ENCODE measurements at regions of chr12 and their contacts with region 1.

Region 1: GRCh38 chr12:27220057-27220987 is 23.8 kb upstream of the STK38L start:
- DNase-seq: peak; percentile 21
- H3K4me3 Mint-ChIP-seq: no peak overlapping the region
- H3K27ac Mint-ChIP-seq: peak overlapping the region; percentile 68
- H3K4me1 Mint-ChIP-seq: peaks cover 17% of the 10 kb centered on the region
- H3K27me3 Mint-ChIP-seq: no peaks in the 10 kb centered on the region

Region 2: GRCh38 chr12:27185234-27186021 is 34.9 kb before region 1 on chr12:
- CTCF ChIA-PET with region 1: no interaction called
- intact Hi-C with region 1: no loop called
- DNase-seq: peak; percentile 71
- H3K4me3 Mint-ChIP-seq: no peak overlapping the region
- H3K27ac Mint-ChIP-seq: no peak overlapping the region
- H3K4me1 Mint-ChIP-seq: peaks cover 19% of the 10 kb centered on the region
- H3K27me3 Mint-ChIP-seq: no peaks in the 10 kb centered on the region

Region 3: DNA sequence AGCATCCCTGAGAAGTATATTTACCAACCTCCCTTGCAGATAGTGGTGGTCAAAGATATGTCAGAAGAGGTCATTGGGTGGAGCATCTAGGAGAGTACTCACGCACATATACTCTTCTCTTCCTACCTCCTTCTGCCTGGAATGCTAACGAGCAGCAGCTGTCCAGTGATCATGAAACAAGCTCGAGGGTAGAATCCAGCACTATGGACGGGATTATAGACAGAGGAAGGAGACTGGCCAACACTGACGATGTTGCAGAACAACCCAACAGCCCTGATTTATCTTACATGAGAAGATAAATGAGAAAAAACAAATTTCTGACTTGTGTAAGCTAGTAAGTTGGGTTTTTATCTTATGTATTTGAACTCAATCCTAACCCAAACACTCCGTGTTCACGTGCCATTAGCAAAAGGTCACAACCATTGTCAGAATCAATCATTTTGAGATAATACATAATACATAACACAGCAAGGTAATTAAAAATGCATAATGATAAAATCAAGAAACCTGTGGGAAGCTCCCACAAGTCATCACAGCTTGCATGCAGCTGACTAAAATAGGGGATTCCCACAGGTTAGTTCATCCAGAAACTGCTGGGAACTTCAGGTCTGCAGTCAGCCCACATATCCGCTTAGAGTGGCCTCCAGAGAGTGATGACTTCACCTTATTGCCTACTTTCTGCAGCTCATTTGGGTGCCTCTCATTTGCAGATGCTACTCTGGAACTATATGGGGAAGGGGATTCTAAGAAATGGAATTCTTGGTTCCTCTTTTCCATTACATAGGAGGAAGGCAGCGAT is 12.5 kb before region 1 on chr12:
- CTCF ChIA-PET with region 1: interaction called, 3 read pairs
- intact Hi-C with region 1: loop called (anchors 1 kb)
- DNase-seq: peak; percentile 74
- H3K4me3 Mint-ChIP-seq: no peak overlapping the region
- H3K27ac Mint-ChIP-seq: peak overlapping the region; percentile 38
- H3K4me1 Mint-ChIP-seq: peaks cover 19% of the 10 kb centered on the region
- H3K27me3 Mint-ChIP-seq: no peaks in the 10 kb centered on the region

Region 4: DNA sequence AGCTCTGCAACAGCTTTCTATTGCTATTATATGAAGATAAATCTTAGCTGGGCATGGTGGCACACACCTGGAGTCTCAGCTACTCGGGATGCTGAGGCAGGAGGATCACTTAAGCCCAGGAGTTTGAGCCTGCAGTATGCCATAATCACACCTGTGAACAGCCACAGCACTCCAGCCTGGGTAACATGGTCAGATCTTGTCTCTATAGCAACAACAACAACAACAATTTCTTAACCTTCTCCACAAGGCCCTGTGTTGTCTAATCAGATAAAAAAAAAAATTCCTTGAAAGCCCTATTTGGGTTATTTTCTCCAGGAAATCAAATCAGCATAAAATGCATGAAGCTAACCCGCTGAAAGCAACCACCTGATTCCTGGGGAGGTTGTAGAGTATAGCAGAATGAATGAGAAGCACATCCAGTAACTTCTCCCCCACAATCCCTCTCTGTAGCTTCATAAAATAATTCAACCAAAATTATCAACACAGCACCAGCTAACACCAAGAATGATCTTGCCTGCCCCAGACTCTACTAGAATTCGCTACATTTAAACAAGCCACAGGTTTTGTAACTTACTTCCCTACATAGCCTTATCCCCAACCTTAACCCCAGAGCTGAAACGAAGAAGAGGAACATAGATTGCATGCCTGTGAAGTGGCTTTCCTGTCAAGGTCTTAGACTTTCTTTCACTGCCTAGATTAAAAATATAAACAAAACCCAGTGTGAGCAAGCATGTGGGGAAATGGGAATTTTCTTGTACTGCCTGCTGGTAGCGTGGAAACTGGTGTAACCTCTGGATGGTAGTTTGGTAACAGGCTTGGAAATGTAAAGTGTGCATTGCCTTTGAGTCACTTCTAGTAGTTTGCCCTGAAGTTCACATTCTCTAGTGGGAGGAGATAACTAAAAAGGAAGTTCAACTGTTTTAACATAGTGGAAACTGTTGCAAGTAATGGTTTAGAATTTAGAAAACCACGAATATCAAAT is 17.8 kb after region 1 on chr12:
- CTCF ChIA-PET with region 1: interaction called, 4 read pairs
- intact Hi-C with region 1: loop called (anchors 1 kb)
- DNase-seq: peak; percentile 16
- H3K4me3 Mint-ChIP-seq: peak overlapping the region; percentile 13
- H3K27ac Mint-ChIP-seq: peak overlapping the region; percentile 64
- H3K4me1 Mint-ChIP-seq: peaks cover 33% of the 10 kb centered on the region
- H3K27me3 Mint-ChIP-seq: no peaks in the 10 kb centered on the region

Region 5: DNA sequence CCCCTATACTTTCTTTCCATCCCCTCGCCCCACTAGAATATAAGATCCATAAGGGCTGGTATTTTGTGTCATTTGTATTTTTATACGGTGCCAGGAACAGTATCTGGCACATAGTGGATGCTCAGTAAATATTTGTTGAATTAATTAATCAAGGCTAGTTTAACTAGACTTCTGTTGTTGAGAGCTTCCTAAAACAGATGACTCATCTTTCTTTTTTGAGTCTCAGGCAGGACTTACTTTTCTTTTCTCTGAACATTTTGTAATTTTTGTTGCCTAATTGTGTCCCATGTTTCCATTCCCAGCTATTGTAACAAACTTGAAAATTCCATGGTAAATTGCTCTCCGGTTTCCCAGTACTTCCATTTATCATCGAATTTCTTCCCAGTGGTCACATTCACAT is 40.4 kb after region 1 on chr12:
- CTCF ChIA-PET with region 1: no interaction called
- intact Hi-C with region 1: no loop called
- DNase-seq: no peak
- H3K4me3 Mint-ChIP-seq: no peak overlapping the region
- H3K27ac Mint-ChIP-seq: no peak overlapping the region
- H3K4me1 Mint-ChIP-seq: peaks cover 24% of the 10 kb centered on the region
- H3K27me3 Mint-ChIP-seq: no peaks in the 10 kb centered on the region

Measured in activated naive CD4-positive, alpha-beta T cell treated with anti-CD3 and anti-CD28 coated beads for 36 hours (primary cell).